PC-9 (cell line): ENCODE measurements at regions of chr4 and their contacts with region 1.

Region 1: DNA sequence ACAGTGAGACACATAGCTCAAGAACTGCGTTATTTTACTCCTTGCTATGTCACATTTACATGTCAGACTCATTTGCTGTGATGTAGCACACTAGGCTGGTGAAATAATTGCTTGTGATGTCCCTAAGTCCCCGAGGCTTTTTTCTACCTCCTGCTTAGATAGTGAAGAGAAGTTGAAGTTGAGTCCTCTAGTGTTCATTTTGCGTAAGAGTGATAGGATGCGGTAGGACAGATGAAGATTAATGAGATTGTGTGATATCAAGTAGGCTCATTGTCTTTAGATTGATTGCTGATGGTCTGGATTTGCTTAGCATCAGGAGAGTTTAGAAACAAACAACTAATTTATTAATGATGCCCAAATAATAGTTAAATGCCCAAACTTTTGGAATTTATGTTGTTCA is 173.6 kb upstream of the NUDT6 start:
- DNase-seq: no peak
- H3K4me3 ChIP-seq: no peak overlapping the region
- H3K27ac ChIP-seq: no peak overlapping the region
- H3K4me1 ChIP-seq: no peaks in the 10 kb centered on the region
- H3K27me3 ChIP-seq: no peaks in the 10 kb centered on the region
- CTCF ChIP-seq: no peak

Region 2: GRCh38 chr4:123259676-123260646 is 163.9 kb after region 1 on chr4:
- CTCF ChIA-PET with region 1: no interaction called
- POLR2A ChIA-PET with region 1: no interaction called
- intact Hi-C with region 1: no loop called
- DNase-seq: no peak
- H3K4me3 ChIP-seq: no peak overlapping the region
- H3K27ac ChIP-seq: no peak overlapping the region
- H3K4me1 ChIP-seq: no peaks in the 10 kb centered on the region
- H3K27me3 ChIP-seq: no peaks in the 10 kb centered on the region
- CTCF ChIP-seq: no peak

Region 3: DNA sequence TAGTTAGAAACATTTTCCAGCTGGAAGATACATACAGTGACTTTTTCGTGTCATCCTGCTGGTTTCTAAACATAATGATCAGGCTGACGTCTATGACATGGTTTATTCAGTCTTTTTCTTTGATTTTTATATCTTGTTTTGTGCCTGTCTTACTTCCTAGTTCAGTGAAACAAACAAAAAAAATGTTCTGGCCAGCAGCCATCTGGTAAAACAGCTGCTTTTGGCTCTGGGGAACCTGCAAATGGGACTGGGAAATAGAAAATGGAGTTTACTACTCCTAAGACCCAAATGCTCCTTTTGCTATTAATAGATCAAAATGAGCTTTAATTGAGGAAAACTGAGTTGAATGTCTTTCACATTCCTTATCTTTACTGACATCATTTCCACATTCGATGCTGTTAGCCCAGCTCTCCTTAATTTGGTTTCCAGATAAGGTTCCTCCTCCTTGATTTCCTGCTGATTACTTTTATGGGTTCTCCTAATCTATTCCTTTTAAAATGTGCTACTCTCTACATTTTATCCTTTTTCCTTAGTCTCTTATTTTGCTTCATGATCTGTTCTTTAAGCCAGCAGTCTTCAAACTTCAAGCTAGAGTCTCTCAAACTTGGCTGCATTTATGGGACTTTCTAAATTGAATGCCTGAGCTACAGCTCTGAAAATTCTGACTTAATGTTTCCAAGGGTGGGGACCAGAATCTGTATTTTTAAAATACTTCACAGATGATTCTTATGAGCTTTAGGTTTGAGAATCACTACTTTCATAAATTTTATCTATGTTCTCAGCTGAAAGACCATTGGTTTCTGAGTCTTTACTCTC is 1117.0 kb after region 1 on chr4:
- CTCF ChIA-PET with region 1: no interaction called
- POLR2A ChIA-PET with region 1: interaction called, 11 read pairs
- intact Hi-C with region 1: no loop called
- DNase-seq: no peak
- H3K4me3 ChIP-seq: no peak overlapping the region
- H3K27ac ChIP-seq: no peak overlapping the region
- H3K4me1 ChIP-seq: no peaks in the 10 kb centered on the region
- H3K27me3 ChIP-seq: no peaks in the 10 kb centered on the region
- CTCF ChIP-seq: no peak